Heart left ventricle (tissue), 16 donors: ENCODE measurements at regions of chr12 and their contacts with region 1.

Region 1: GRCh38 chr12:67943226-67943892 is 45.9 kb upstream of the IFNG-AS1 start:
- DNase-seq: peak in 4 of 5 donors; percentile 31 to 68 (median 65)
- ATAC-seq: peak; percentile 63 to 88 (median 86)
- H3K4me3 ChIP-seq: no peak overlapping the region
- H3K27ac ChIP-seq: peak overlapping the region in 8 of 12 donors; percentile 6 to 65 (median 28)
- H3K4me1 ChIP-seq: peaks cover 0 to 25% (median 7%) of the 10 kb centered on the region in 12 donors
- H3K27me3 ChIP-seq: no peaks in the 10 kb centered on the region
- CTCF ChIP-seq: peak; percentile 63 to 85 (median 78)
- POLR2A ChIP-seq: no peak

Region 2: GRCh38 chr12:67426067-67426466 is 517.3 kb before region 1 on chr12:
- intact Hi-C with region 1: loop called in 6 of 10 experiments (anchors 1 to 5 kb)
- DNase-seq: no peak
- ATAC-seq: no peak
- H3K4me3 ChIP-seq: no peak overlapping the region
- H3K27ac ChIP-seq: peak overlapping the region in 2 of 12 donors; percentile 1 to 17
- H3K4me1 ChIP-seq: peaks cover 0 to 14% (median 1%) of the 10 kb centered on the region in 12 donors
- H3K27me3 ChIP-seq: no peaks in the 10 kb centered on the region
- CTCF ChIP-seq: no peak
- POLR2A ChIP-seq: no peak

Region 3: DNA sequence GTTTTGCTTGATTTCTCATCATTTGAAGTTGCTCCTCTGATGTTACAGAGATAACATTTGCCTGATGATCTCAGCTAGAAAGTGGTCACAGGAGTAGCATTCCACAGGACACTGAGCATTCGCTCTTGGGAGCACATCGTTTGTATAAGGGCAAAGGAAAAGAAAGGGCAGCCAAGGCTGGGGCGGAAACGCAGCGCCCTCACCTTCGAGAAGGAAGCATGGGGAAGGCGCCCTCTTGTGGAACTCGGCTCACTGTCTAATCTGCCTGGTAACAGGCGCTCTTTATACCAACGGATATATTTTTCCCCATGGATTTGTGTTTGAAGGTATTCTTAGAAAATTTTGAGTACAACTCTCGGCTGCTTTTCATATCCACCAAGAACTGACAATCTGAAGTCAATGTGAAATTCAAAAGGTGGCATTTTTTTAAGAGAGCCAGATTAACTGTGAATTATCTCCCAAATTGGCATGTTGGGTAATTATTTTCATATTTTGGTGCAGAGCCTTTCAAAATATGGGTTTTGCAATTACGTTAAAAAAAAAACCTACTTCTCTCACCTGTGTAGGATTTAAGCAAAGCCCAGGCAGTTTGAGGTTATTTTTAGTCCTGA is 501.5 kb before region 1 on chr12:
- intact Hi-C with region 1: loop called in 5 of 10 experiments (anchors 5 kb)
- DNase-seq: peak; percentile 85 to 92 (median 87)
- ATAC-seq: peak; percentile 94 to 98 (median 96)
- H3K4me3 ChIP-seq: peak overlapping the region in 6 of 12 donors; percentile 3 to 49 (median 23)
- H3K27ac ChIP-seq: peak overlapping the region in 11 of 12 donors; percentile 3 to 52 (median 33)
- H3K4me1 ChIP-seq: peaks cover 0 to 18% (median 11%) of the 10 kb centered on the region in 12 donors
- H3K27me3 ChIP-seq: no peaks in the 10 kb centered on the region
- CTCF ChIP-seq: peak; percentile 67 to 92 (median 84)
- POLR2A ChIP-seq: no peak

Region 4: GRCh38 chr12:67655829-67656228 is 287.5 kb before region 1 on chr12:
- intact Hi-C with region 1: loop called in 7 of 10 experiments (anchors 2 to 5 kb)
- DNase-seq: no peak
- ATAC-seq: peak in 3 of 4 donors; percentile 37 to 41 (median 39)
- H3K4me3 ChIP-seq: no peak overlapping the region
- H3K27ac ChIP-seq: peak overlapping the region in 9 of 12 donors; percentile 3 to 53 (median 21)
- H3K4me1 ChIP-seq: peaks cover 15 to 99% (median 77%) of the 10 kb centered on the region in 12 donors
- H3K27me3 ChIP-seq: no peaks in the 10 kb centered on the region
- CTCF ChIP-seq: no peak
- POLR2A ChIP-seq: no peak

Region 5: DNA sequence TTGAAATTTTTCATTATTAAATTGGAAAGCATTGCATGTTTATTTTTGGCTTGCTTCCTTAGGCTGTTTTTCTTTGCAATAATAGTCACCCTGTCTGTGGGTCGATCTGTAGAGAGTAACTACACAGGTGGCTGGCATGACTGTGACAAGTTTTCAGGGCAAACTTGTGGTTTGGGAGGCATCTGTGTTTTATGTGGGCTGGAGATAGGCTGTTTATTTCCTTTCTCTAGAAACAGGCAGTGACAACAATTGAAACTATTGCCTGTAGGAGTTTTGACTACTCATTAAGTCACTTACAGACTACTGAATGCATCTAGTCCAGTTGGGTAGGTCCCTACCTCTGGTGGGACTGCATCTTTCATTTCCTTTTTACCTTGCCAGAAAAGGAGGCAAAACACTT is 139.2 kb before region 1 on chr12:
- intact Hi-C with region 1: loop called in 4 of 10 experiments (anchors 10 kb)
- DNase-seq: no peak
- ATAC-seq: no peak
- H3K4me3 ChIP-seq: no peak overlapping the region
- H3K27ac ChIP-seq: no peak overlapping the region
- H3K4me1 ChIP-seq: peaks cover 0 to 18% (median 5%) of the 10 kb centered on the region in 12 donors
- H3K27me3 ChIP-seq: no peaks in the 10 kb centered on the region
- CTCF ChIP-seq: no peak
- POLR2A ChIP-seq: no peak